Activated CD8-positive, alpha-beta T cell treated with anti-CD3 and anti-CD28 coated beads for 36 hours (primary cell): ENCODE measurements at regions of chr1 and their contacts with region 1.

Region 1: GRCh38 chr1:203702130-203702577 is 62.8 kb upstream of the LAX1 start:
- DNase-seq: peak; percentile 80
- ATAC-seq: peak; percentile 87
- H3K4me3 Mint-ChIP-seq: no peak overlapping the region
- H3K27ac Mint-ChIP-seq: peak overlapping the region; percentile 44
- H3K4me1 Mint-ChIP-seq: peaks cover 2% of the 10 kb centered on the region
- H3K27me3 Mint-ChIP-seq: no peaks in the 10 kb centered on the region
- CTCF ChIP-seq: peak; percentile 96

Region 2: GRCh38 chr1:203340112-203340804 is 361.9 kb before region 1 on chr1:
- CTCF ChIA-PET with region 1: interaction called, 3 read pairs
- POLR2A ChIA-PET with region 1: no interaction called
- intact Hi-C with region 1: loop called (anchors 10 kb)
- DNase-seq: peak; percentile 71
- ATAC-seq: peak; percentile 81
- H3K4me3 Mint-ChIP-seq: no peak overlapping the region
- H3K27ac Mint-ChIP-seq: no peak overlapping the region
- H3K4me1 Mint-ChIP-seq: peaks cover 17% of the 10 kb centered on the region
- H3K27me3 Mint-ChIP-seq: peaks cover 11% of the 10 kb centered on the region
- CTCF ChIP-seq: peak; percentile 91

Region 3: DNA sequence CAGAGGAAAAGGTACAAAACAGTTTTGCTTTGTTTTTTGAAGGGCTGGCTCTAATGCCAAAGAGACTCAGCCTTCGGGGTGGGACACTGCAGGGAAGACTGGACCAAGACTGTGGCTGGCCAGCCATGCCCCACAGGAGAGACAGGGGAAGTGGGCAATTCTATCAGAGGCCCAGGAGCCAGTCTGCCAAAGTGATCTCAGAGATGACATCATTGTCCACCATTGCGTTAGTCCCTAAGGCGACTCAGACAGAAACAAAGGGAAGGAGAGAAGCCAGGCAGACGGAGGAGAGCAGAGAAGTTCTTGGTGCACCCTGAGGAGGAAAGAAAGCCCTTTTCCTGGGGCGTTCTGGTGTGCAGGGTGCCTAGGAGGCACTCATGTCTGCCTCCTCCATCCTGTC is 181.8 kb before region 1 on chr1:
- CTCF ChIA-PET with region 1: interaction called, 17 read pairs
- POLR2A ChIA-PET with region 1: no interaction called
- intact Hi-C with region 1: no loop called
- DNase-seq: no peak
- ATAC-seq: no peak
- H3K4me3 Mint-ChIP-seq: no peak overlapping the region
- H3K27ac Mint-ChIP-seq: no peak overlapping the region
- H3K4me1 Mint-ChIP-seq: peaks cover 1% of the 10 kb centered on the region
- H3K27me3 Mint-ChIP-seq: no peaks in the 10 kb centered on the region
- CTCF ChIP-seq: no peak

Region 4: DNA sequence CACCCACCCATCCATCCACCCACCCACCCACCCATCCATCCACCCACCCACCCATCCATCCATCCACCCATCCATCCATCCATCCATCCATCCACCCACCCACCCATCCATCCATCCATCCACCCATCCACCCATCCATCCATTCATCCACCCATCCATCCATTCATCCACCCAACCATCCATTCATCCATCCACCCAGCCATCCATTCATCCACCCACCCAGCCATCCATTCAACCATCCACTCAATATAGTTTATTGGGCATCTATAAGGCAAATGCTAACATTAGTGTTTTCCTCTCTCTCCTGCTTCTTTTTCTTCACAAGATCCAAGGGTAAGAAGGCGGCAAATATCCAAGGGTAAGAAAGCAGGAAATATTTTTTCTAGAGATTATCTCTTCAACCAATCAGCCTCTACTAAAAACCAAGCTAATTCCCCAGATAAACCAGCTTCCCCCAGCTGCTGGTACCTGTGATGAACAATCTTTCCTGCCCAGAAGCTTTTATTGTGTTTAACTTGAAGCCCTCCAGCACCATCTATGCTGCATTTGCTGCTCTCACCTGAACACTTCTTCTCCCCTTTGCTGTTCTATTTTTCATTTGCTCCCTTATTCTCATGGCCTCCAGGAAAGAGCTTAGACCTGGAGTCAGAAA is 98.1 kb before region 1 on chr1:
- CTCF ChIA-PET with region 1: interaction called, 20 read pairs
- POLR2A ChIA-PET with region 1: no interaction called
- intact Hi-C with region 1: no loop called
- DNase-seq: no peak
- ATAC-seq: no peak
- H3K4me3 Mint-ChIP-seq: no peak overlapping the region
- H3K27ac Mint-ChIP-seq: no peak overlapping the region
- H3K4me1 Mint-ChIP-seq: peaks cover 26% of the 10 kb centered on the region
- H3K27me3 Mint-ChIP-seq: no peaks in the 10 kb centered on the region
- CTCF ChIP-seq: no peak

Region 5: DNA sequence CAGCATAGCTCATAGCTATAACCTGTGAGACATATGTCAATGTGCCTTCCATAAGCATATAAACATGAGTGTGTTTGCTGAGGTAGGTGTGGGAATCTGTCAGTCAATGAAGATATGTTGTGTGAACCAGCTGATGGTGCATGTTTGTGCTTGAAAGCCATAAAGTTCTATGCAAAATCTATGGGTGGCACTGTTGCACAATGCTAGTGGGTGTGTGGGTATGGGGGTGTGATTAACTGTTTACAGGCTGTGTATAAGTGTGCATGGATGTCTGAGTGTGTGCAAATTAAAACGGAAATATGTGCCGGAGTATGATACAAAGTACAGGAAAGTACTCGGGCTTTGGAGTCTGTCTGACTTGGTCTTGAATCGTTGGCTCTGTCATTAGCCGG is 76.5 kb before region 1 on chr1:
- CTCF ChIA-PET with region 1: interaction called, 66 read pairs
- POLR2A ChIA-PET with region 1: interaction called, 6 read pairs
- intact Hi-C with region 1: loop called (anchors 2 kb)
- DNase-seq: peak; percentile 75
- ATAC-seq: peak; percentile 47
- H3K4me3 Mint-ChIP-seq: peak overlapping the region; percentile 90
- H3K27ac Mint-ChIP-seq: peak overlapping the region; percentile 73
- H3K4me1 Mint-ChIP-seq: peaks cover 58% of the 10 kb centered on the region
- H3K27me3 Mint-ChIP-seq: no peaks in the 10 kb centered on the region
- CTCF ChIP-seq: peak; percentile 37

Region 6: DNA sequence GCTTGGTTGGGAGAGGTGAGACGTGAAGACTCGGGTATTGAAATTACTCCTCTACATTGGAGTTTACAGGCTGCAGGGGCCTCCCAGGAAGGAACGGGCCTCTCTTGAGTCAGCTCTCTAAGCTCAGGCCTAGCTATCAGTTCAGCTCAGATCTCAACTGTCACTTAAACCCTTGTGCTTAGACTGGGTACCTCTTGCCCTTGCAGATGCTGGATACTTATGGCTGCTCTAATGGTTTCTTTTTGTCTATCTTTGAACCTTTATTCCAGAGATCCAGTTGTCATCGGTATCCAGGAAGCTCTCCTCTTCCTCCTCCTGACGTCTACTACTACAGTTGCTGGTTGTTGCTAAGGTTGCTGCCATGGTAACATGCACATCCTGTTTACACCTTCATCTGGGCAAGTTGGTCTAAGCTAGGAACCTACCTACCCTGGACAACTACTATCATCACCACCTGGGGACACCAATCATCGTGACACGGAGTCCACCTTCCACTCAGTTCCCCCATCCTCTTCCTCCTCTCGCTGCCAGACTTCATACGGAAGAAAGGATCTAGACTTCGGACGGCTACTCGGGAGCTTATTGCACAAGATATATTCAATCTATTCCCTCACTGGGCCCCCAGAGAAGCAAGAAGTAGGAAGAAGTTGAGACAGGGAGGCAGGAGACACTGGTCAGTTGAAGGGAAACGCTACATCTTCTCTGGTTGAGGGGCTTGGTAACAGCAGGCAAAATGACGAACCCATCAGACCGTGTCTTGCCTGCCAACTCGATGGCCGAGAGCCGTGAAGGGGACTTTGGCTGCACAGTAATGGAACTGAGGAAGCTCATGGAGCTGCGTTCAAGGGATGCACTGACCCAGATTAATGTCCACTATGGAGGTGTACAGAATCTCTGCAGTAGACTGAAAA is 19.4 kb before region 1 on chr1:
- CTCF ChIA-PET with region 1: interaction called, 127 read pairs
- POLR2A ChIA-PET with region 1: interaction called, 3 read pairs
- intact Hi-C with region 1: no loop called
- DNase-seq: peak; percentile 76
- ATAC-seq: peak; percentile 92
- H3K4me3 Mint-ChIP-seq: peak overlapping the region; percentile 47
- H3K27ac Mint-ChIP-seq: peak overlapping the region; percentile 81
- H3K4me1 Mint-ChIP-seq: peaks cover 31% of the 10 kb centered on the region
- H3K27me3 Mint-ChIP-seq: no peaks in the 10 kb centered on the region
- CTCF ChIP-seq: no peak

Region 7: DNA sequence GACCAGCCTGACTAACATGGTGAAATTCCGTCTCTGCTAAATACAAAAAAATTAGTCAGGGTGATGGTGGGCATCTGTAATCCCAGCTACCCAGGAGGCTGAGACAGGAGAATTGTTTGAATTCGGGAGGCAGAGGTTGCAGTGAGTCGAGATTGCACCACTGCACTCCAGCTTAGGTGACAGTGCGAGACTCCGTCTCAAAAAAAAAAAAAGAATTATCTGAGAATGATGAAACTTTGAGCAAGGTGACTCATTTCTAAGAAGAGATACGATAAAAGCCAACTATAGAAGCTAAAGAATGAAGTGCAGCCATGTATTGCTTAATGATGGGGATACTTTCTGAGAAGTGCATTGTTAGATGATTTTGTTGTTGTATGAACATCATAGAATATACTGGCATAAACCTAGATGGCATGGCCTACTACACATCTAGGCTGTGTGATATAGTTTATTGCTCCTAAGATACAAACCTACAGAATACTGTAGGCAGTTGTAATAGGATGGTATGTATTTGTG is 223.9 kb after region 1 on chr1:
- CTCF ChIA-PET with region 1: no interaction called
- POLR2A ChIA-PET with region 1: no interaction called
- intact Hi-C with region 1: no loop called
- DNase-seq: no peak
- ATAC-seq: no peak
- H3K4me3 Mint-ChIP-seq: no peak overlapping the region
- H3K27ac Mint-ChIP-seq: no peak overlapping the region
- H3K4me1 Mint-ChIP-seq: no peaks in the 10 kb centered on the region
- H3K27me3 Mint-ChIP-seq: peaks cover 2% of the 10 kb centered on the region
- CTCF ChIP-seq: no peak